ENCODE measurements at regions of chr2 and their contacts with region 1.

Region 1: DNA sequence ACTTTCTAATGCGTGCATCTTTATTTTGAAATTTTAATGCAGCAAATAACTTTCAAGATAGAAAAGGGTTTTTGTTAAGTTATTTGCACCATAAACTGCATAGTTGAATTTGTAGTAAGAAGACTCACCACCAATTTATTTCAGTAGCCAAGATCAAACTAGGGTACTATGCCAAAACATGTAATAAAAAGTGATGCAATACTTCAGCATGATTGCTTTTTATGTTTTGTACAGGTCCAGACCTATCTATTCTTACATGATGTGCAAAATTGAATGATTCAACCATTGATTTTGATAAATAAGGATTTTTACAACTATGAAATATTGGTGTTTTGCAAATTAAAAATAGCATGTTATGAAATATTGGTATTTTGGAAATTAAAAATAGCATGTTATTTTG is 26.7 kb downstream of the AGPS start:
- DNase-seq: no peak
- ATAC-seq: no peak
- H3K4me3 Mint-ChIP-seq: no peak overlapping the region
- H3K27ac Mint-ChIP-seq: no peak overlapping the region
- H3K4me1 Mint-ChIP-seq: peaks cover 23% of the 10 kb centered on the region
- H3K27me3 Mint-ChIP-seq: no peaks in the 10 kb centered on the region

Region 2: DNA sequence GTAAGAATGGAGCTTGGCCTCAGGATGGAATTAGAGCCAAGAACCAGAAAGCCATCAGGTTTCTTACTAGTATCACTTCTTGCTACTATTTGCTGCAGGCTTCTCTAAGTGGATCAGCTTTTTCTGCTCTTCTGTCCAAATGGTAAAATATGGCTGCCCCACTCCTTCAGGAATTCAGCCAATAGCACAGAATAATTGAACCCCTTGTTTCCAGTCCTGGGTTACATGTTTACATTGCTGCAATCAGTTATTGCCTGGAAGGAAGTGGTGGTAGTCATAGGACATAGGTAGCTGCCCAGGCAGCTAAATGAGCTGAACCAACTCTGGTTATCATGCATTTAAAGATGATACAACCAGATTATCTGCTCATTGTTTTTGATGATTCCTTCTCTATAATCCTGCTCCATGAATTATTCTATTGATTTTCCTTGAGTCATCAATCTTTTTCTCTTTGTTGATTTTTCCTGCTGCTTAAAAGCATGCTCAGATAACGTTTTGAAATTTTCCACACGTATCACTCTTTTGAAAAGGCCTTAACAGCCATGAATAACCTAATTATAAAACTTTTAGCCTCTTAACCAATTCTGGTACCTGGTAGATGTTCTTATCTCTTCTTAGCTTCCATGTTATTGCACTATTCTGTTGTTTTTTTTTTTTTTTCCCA is 14.1 kb before region 1 on chr2:
- CTCF ChIA-PET with region 1: interaction called, 18 read pairs
- POLR2A ChIA-PET with region 1: no interaction called
- DNase-seq: no peak
- ATAC-seq: no peak
- H3K4me3 Mint-ChIP-seq: no peak overlapping the region
- H3K27ac Mint-ChIP-seq: no peak overlapping the region
- H3K4me1 Mint-ChIP-seq: peaks cover 11% of the 10 kb centered on the region
- H3K27me3 Mint-ChIP-seq: no peaks in the 10 kb centered on the region